ENCODE measurements at regions of chr1 and their contacts with region 1.

Region 1: GRCh38 chr1:183144752-183145151 is 41.3 kb upstream of the LAMC2 start:
- DNase-seq: no peak
- ATAC-seq: no peak

Region 2: DNA sequence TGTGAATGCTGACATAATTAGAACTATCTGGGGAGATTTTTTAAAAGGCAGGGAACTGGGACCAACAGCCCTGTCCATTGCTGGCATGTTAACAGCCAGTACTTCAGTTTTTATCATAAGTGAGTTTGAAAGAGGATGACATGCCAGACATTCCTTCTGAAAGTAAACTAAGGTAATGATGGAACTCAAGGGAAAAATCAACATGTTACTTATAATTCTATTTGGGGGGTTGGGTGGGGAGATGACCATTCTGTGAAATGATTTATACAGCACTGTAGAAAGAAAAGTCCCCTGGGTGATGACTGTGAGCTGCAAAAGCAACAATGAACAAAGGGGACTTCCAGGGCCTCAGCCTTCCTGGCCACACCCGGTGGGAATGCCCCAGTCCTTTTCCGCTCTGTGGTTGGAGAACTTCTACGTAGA is 35.9 kb after region 1 on chr1:
- intact Hi-C with region 1: loop called (anchors 5 kb)
- DNase-seq: no peak
- ATAC-seq: peak; percentile 82

Region 3: GRCh38 chr1:183227963-183228649 is 83.4 kb after region 1 on chr1:
- intact Hi-C with region 1: loop called (anchors 5 kb)
- DNase-seq: no peak
- ATAC-seq: peak; percentile 64

Region 4: DNA sequence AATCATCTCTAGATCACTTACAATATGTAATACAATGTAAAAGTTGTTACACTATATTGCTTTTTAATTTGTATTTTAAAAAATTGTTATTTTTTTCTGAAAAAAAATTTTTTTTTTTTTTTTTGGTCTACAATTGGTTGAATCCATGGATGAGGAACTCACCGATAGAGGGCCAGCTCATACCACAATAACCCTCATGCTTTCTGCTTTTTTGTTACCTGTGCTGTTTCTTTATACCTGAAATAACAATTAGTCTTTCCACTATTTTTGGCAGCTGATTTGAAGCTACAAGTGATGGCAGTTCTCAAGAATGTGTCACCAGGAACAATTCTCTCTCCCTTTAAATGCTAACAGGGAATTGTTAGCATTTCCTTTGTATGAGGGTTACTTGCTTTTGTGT is 339.5 kb after region 1 on chr1:
- intact Hi-C with region 1: no loop called
- DNase-seq: no peak
- ATAC-seq: no peak